Sigmoid colon (tissue), 7 donors: ENCODE measurements at regions of chr6 and their contacts with region 1.

Region 1: GRCh38 chr6:154783229-154783628 is 50.0 kb downstream of the SCAF8 start:
- DNase-seq: no peak
- H3K4me3 ChIP-seq: no peak overlapping the region
- H3K27ac ChIP-seq: no peak overlapping the region
- H3K4me1 ChIP-seq: peaks cover 0 to 3% (median under 1%) of the 10 kb centered on the region in 4 donors
- H3K27me3 ChIP-seq: no peaks in the 10 kb centered on the region
- CTCF ChIP-seq: no peak
- EP300 ChIP-seq: no peak
- POLR2A ChIP-seq: no peak

Region 2: GRCh38 chr6:153840039-153840850 is 943.0 kb before region 1 on chr6:
- intact Hi-C with region 1: no loop called
- DNase-seq: no peak
- H3K4me3 ChIP-seq: no peak overlapping the region
- H3K27ac ChIP-seq: no peak overlapping the region
- H3K4me1 ChIP-seq: no peaks in the 10 kb centered on the region
- H3K27me3 ChIP-seq: no peaks in the 10 kb centered on the region
- CTCF ChIP-seq: no peak
- EP300 ChIP-seq: no peak
- POLR2A ChIP-seq: no peak

Region 3: DNA sequence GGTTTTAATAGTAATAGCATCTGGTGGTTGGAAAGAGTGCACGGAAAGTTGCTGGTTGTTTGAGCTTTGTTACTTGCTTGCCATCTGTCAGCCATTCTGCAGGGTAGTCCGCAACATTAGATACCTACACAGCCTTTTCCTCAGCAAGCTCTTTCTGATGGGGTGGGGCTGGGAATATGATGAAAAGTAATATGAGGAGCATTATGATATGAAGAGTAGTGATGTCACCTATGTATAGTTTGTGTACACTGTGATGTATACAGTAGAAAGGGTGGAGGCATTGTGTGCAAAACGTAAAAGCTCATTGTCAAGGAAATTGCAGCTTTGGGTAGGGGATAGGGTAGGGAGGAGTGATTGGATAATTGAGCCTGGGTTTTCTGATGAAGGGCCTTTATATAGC is 33.9 kb before region 1 on chr6:
- intact Hi-C with region 1: loop called (anchors 5 kb)
- DNase-seq: no peak
- H3K4me3 ChIP-seq: no peak overlapping the region
- H3K27ac ChIP-seq: no peak overlapping the region
- H3K4me1 ChIP-seq: peaks cover 0 to 50% (median 40%) of the 10 kb centered on the region in 4 donors
- H3K27me3 ChIP-seq: no peaks in the 10 kb centered on the region
- CTCF ChIP-seq: no peak
- EP300 ChIP-seq: no peak
- POLR2A ChIP-seq: no peak